Heart right ventricle (tissue), 16 donors: ENCODE measurements at regions of chr4 and their contacts with region 1.

Region 1: GRCh38 chr4:120049732-120050494 is 16.7 kb downstream of the MAD2L1 start:
- DNase-seq: peak; percentile 21 to 87
- ATAC-seq: peak; percentile 89 to 94 (median 93)
- H3K4me3 ChIP-seq: peak overlapping the region in 6 of 10 donors; percentile 17 to 41 (median 32)
- H3K27ac ChIP-seq: peak overlapping the region in 7 of 10 donors; percentile 8 to 56 (median 50)
- H3K4me1 ChIP-seq: peaks cover 0 to 25% (median 0%) of the 10 kb centered on the region in 9 donors
- H3K27me3 ChIP-seq: no peaks in the 10 kb centered on the region
- CTCF ChIP-seq: peak; percentile 79 to 92 (median 85)

Region 2: DNA sequence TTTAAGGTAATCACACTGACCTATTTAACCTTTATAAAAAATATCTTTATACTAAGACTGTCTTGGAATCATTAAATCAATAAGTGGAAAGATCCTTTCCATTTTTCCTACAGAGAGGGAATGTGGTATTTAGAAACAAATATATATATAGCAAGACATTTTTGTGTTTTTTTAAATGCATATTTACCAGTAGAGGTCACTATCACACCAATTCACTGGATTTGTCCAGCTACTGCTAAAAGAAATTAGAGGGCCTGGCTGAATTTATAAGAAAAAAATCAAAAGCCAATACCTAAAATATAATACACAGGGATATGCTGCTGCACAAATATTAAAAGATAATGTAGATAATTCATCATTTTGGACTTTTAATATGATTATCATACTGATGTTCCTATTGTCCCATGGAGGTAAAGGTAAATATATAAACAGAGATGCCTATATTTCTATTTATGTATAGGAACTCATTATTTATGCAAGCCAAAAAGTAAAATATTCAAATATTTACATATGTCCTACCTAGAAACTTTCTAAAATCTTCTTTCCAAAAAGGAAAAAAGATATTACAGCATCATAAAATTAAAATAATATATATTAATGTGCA is 490.8 kb before region 1 on chr4:
- intact Hi-C with region 1: loop called in 8 of 10 experiments (anchors 5 to 10 kb)
- DNase-seq: no peak
- ATAC-seq: no peak
- H3K4me3 ChIP-seq: no peak overlapping the region
- H3K27ac ChIP-seq: no peak overlapping the region
- H3K4me1 ChIP-seq: no peaks in the 10 kb centered on the region
- H3K27me3 ChIP-seq: no peaks in the 10 kb centered on the region
- CTCF ChIP-seq: peak; percentile 18 to 69 (median 53)

Region 3: GRCh38 chr4:119692001-119692400 is 357.9 kb before region 1 on chr4:
- intact Hi-C with region 1: loop called in 9 of 10 experiments (anchors 2 to 10 kb)
- DNase-seq: no peak
- ATAC-seq: peak in 7 of 8 donors; percentile 56 to 83 (median 74)
- H3K4me3 ChIP-seq: peak overlapping the region in 5 of 10 donors; percentile 18 to 50 (median 33)
- H3K27ac ChIP-seq: peak overlapping the region in 5 of 10 donors; percentile 28 to 68 (median 53)
- H3K4me1 ChIP-seq: peaks cover 0 to 3% (median 0%) of the 10 kb centered on the region in 9 donors
- H3K27me3 ChIP-seq: no peaks in the 10 kb centered on the region
- CTCF ChIP-seq: peak in 7 of 9 donors; percentile 27 to 65 (median 54)

Region 4: DNA sequence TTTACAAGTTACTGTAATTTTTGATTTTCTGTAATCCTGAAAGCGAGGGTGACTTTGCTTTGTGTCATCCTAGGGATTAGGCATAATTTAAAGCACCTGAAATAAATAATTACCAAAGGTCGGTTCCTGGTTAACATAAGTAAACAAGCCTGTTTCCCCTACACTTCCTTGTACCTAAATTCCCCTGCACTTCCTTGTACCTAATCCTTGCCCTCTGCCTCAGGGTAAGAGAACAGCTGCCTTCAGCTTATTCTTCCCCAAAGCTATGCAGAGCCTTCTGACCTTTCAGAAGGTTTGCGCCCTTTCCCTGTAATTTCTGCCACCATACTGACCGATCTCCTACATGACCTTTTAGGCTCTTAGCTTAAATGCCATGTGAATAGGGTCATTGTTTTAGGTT is 255.2 kb before region 1 on chr4:
- intact Hi-C with region 1: loop called in 3 of 10 experiments (anchors 5 to 10 kb)
- DNase-seq: no peak
- ATAC-seq: no peak
- H3K4me3 ChIP-seq: no peak overlapping the region
- H3K27ac ChIP-seq: no peak overlapping the region
- H3K4me1 ChIP-seq: no peaks in the 10 kb centered on the region
- H3K27me3 ChIP-seq: no peaks in the 10 kb centered on the region
- CTCF ChIP-seq: no peak

Region 5: GRCh38 chr4:119816473-119816872 is 233.4 kb before region 1 on chr4:
- intact Hi-C with region 1: no loop called
- DNase-seq: no peak
- ATAC-seq: no peak
- H3K4me3 ChIP-seq: no peak overlapping the region
- H3K27ac ChIP-seq: no peak overlapping the region
- H3K4me1 ChIP-seq: no peaks in the 10 kb centered on the region
- H3K27me3 ChIP-seq: no peaks in the 10 kb centered on the region
- CTCF ChIP-seq: no peak

Region 6: GRCh38 chr4:120163895-120164294 is 114.0 kb after region 1 on chr4:
- intact Hi-C with region 1: no loop called
- DNase-seq: no peak
- ATAC-seq: peak in 3 of 8 donors; percentile 44 to 67 (median 53)
- H3K4me3 ChIP-seq: no peak overlapping the region
- H3K27ac ChIP-seq: no peak overlapping the region
- H3K4me1 ChIP-seq: peaks cover 0 to 16% (median 7%) of the 10 kb centered on the region in 9 donors
- H3K27me3 ChIP-seq: no peaks in the 10 kb centered on the region
- CTCF ChIP-seq: no peak

Region 7: GRCh38 chr4:120418146-120418545 is 368.2 kb after region 1 on chr4:
- intact Hi-C with region 1: no loop called
- DNase-seq: no peak
- ATAC-seq: no peak
- H3K4me3 ChIP-seq: no peak overlapping the region
- H3K27ac ChIP-seq: no peak overlapping the region
- H3K4me1 ChIP-seq: no peaks in the 10 kb centered on the region
- H3K27me3 ChIP-seq: no peaks in the 10 kb centered on the region
- CTCF ChIP-seq: no peak